ENCODE measurements at regions of chr6 and their contacts with region 1.

Region 1: GRCh38 chr6:84815896-84816735 is 51.7 kb upstream of the TBX18 start:
- DNase-seq: no peak
- H3K4me3 ChIP-seq: no peak overlapping the region
- CTCF ChIP-seq: no peak
- POLR2A ChIP-seq: no peak

Region 2: DNA sequence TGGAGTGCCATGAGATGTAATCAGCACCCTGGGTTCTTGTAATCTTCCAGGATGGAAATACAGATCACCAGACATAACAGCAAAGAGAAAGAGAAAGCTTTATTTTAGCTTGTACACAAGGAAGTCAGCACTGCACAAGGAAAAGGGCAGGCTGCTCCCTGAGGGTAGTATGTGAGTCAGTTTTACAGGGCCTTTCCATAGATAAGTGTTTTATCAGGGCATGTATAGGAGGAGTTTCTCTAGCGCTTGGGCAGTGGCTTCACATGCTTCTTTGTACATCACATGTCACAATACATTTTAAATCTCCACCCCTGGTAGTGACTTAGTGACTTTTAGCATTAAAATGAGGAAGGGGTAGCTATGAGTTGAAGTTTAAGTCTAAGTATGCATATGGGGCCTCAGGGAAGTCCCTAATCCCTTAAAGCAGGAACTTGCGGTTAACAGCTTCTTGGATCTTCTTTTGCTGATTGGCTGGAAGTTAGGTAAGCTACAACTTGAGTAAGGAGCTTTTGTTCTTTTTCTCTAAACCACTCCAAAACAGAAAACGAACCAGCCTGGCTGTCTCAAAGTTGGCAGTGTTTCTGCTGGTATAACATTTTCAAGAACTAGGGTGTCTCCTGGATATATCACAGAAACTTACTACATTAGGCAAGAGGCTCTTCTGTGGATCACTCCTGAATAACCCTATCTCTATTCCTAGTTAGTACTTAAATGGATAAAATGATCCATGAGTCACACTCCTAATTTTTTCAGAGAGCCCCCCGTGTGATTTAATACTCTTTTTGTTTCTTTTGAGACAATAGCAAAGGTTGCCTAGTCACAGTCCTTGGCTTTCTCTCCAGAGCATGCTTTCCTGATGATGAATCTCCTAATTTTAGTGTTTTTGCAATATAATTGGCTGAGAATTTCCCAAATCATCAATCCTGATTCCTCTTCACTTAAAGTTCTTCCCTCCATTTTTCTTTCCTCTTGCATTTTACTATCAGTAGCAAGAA is 722.4 kb before region 1 on chr6:
- intact Hi-C with region 1: no loop called
- DNase-seq: no peak
- H3K4me3 ChIP-seq: no peak overlapping the region
- CTCF ChIP-seq: no peak
- POLR2A ChIP-seq: no peak

Region 3: GRCh38 chr6:84161190-84161589 is 654.9 kb before region 1 on chr6:
- intact Hi-C with region 1: loop called (anchors 5 kb)
- DNase-seq: no peak
- H3K4me3 ChIP-seq: no peak overlapping the region
- CTCF ChIP-seq: no peak
- POLR2A ChIP-seq: no peak